IMR-90 (cell line): ENCODE measurements at regions of chr5 and their contacts with region 1.

Region 1: GRCh38 chr5:22709743-22710142 is 143.4 kb downstream of the CDH12 start:
- DNase-seq: no peak
- ATAC-seq: no peak
- H3K4me3 ChIP-seq: no peak overlapping the region
- H3K27ac ChIP-seq: no peak overlapping the region
- H3K4me1 ChIP-seq: no peaks in the 10 kb centered on the region
- H3K27me3 ChIP-seq: no peaks in the 10 kb centered on the region
- CTCF ChIP-seq: no peak
- POLR2A ChIP-seq: no peak
- RAD21 ChIP-seq: no peak

Region 2: GRCh38 chr5:22663124-22663523 is 46.6 kb before region 1 on chr5:
- CTCF ChIA-PET with region 1: no interaction called
- POLR2A ChIA-PET with region 1: no interaction called
- dilution Hi-C with region 1: no loop called
- in situ Hi-C with region 1: no loop called
- intact Hi-C with region 1: loop called (anchors 5 kb)
- DNase-seq: no peak
- ATAC-seq: no peak
- H3K4me3 ChIP-seq: no peak overlapping the region
- H3K27ac ChIP-seq: no peak overlapping the region
- H3K4me1 ChIP-seq: no peaks in the 10 kb centered on the region
- H3K27me3 ChIP-seq: no peaks in the 10 kb centered on the region
- CTCF ChIP-seq: no peak
- POLR2A ChIP-seq: no peak
- RAD21 ChIP-seq: no peak

Region 3: DNA sequence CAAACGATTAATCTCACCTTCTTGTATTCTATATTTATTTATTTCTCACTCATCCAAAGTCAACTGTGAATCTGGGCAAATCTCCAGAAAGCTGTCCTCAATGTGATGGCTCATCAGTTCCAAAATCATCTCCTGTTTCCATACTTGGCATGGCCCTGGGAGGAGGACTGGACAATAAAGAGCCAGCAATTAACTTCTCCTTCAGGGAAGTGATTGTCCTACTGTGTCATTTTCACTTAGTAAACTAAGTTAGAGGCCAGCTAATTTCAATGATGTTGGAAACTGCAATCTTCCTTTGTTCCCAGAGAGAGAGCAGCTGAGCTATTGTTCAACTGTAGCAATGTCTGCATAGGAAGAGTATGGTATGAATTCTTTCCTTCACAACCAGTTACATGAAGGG is 125.9 kb after region 1 on chr5:
- CTCF ChIA-PET with region 1: no interaction called
- POLR2A ChIA-PET with region 1: no interaction called
- dilution Hi-C with region 1: no loop called
- in situ Hi-C with region 1: no loop called
- intact Hi-C with region 1: no loop called
- DNase-seq: no peak
- ATAC-seq: no peak
- H3K4me3 ChIP-seq: no peak overlapping the region
- H3K27ac ChIP-seq: no peak overlapping the region
- H3K4me1 ChIP-seq: no peaks in the 10 kb centered on the region
- H3K27me3 ChIP-seq: no peaks in the 10 kb centered on the region
- CTCF ChIP-seq: no peak
- POLR2A ChIP-seq: no peak
- RAD21 ChIP-seq: no peak

Region 4: DNA sequence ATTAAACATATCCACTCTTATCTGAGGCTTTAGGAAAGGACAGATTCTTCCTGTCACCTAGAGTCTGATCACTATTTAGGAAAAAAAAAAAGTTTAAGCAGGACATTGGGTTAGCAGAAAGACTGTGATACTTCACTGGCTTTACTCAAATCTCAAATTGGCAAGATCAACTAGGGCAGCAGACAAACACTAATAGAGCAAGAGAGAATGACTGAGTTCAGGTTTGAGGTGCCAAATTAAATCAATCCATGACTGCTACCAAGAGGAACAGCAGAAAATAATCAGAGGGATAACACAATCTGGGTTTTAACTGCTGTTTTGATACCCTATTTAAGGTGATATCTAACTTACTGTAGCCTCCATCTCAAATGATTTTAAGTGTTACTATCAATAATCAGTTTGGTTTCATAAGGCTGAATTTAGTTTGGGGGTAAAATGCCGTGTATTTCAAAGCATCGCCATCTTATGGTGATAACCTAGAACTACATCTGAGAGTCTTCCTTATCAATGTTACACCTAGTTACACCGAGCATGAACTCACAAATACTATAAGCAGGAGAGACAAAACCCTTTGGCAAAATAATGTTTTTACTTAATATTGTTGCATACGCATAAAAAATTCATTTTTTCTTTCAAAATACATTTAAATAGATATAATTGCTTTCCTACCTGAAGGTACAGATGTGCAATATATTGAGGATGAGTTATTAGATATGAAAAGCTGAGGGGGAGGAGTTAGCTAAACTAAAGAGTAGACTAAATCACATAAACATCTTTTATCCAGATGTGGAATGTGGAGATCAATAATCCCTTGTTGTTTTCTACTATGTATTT is 429.8 kb after region 1 on chr5:
- CTCF ChIA-PET with region 1: no interaction called
- POLR2A ChIA-PET with region 1: no interaction called
- dilution Hi-C with region 1: no loop called
- in situ Hi-C with region 1: no loop called
- intact Hi-C with region 1: no loop called
- DNase-seq: peak; percentile 0
- ATAC-seq: no peak
- H3K4me3 ChIP-seq: no peak overlapping the region
- H3K27ac ChIP-seq: no peak overlapping the region
- H3K4me1 ChIP-seq: no peaks in the 10 kb centered on the region
- H3K27me3 ChIP-seq: no peaks in the 10 kb centered on the region
- CTCF ChIP-seq: peak; percentile 34
- POLR2A ChIP-seq: no peak
- RAD21 ChIP-seq: peak; percentile 20; the same call in 1 of the 2 replicates